ENCODE measurements at regions of chr5 and their contacts with region 1.

Region 1: DNA sequence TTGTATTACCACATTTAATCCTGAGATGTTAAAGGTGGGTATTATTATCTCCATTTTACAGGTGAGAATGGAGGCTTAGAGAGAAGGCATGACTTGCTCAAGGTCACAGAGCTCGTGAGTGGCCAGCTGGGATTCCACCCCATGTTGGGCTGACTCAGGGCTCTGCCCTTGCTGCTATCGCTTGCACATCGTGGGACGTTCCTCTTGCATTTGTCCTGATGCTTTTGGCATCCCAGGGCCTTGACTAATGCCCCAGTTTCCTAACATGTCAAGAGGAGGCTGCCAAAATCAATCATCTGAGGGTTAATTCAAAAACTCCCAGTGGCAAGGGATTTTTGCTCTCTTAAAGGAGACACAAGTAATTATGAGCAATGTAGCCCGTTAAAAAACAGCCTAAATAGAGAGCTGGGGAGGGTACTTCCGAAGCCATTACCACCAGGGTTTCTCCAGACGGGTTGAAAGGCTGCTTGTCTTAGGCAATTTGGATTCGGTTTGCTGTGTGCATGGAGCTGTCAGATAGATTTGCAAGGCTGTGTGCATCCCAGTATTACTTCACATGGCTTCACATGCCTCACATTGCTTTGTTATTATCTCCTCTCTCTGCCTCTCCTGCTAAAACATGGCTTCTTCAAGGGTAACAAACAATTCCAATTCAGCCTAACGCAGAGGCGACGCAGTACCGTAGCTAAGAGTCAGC is 347.4 kb downstream of the DRD1 start:
- DNase-seq: no peak
- H3K4me3 ChIP-seq: no peak overlapping the region
- H3K27ac ChIP-seq: no peak overlapping the region
- H3K4me1 ChIP-seq: no peaks in the 10 kb centered on the region
- H3K27me3 ChIP-seq: no peaks in the 10 kb centered on the region
- CTCF ChIP-seq: no peak

Region 2: GRCh38 chr5:174793684-174794328 is 302.8 kb before region 1 on chr5:
- CTCF ChIA-PET with region 1: no interaction called
- POLR2A ChIA-PET with region 1: no interaction called
- intact Hi-C with region 1: no loop called
- DNase-seq: peak; percentile 73
- H3K4me3 ChIP-seq: no peak overlapping the region
- H3K27ac ChIP-seq: no peak overlapping the region
- H3K4me1 ChIP-seq: no peaks in the 10 kb centered on the region
- H3K27me3 ChIP-seq: peaks cover 21% of the 10 kb centered on the region
- CTCF ChIP-seq: peak; percentile 92

Region 3: DNA sequence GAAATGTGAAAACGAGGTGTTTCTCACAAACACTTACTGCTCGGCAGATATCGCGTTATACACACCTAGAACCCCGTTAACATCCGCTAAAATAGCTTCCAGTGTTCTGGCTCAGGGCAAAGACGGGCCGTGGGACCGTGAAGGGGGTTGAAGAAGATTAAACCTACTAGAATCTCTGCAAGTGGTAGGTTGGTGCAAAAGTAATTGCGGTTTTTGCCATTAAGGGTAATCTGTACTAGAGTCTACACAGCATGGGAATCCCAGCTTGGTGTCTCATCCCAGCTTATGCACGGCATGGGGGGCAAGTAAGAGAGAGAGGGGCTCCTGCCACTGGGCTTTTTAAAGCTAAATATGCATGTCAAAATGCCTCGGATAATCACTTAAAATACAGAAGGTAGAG is 605.2 kb after region 1 on chr5:
- CTCF ChIA-PET with region 1: no interaction called
- POLR2A ChIA-PET with region 1: interaction called, 10 read pairs
- intact Hi-C with region 1: no loop called
- DNase-seq: no peak
- H3K4me3 ChIP-seq: no peak overlapping the region
- H3K27ac ChIP-seq: no peak overlapping the region
- H3K4me1 ChIP-seq: no peaks in the 10 kb centered on the region
- H3K27me3 ChIP-seq: peaks cover 30% of the 10 kb centered on the region
- CTCF ChIP-seq: no peak